ENCODE measurements at regions of chr2 and their contacts with region 1.

Region 1: DNA sequence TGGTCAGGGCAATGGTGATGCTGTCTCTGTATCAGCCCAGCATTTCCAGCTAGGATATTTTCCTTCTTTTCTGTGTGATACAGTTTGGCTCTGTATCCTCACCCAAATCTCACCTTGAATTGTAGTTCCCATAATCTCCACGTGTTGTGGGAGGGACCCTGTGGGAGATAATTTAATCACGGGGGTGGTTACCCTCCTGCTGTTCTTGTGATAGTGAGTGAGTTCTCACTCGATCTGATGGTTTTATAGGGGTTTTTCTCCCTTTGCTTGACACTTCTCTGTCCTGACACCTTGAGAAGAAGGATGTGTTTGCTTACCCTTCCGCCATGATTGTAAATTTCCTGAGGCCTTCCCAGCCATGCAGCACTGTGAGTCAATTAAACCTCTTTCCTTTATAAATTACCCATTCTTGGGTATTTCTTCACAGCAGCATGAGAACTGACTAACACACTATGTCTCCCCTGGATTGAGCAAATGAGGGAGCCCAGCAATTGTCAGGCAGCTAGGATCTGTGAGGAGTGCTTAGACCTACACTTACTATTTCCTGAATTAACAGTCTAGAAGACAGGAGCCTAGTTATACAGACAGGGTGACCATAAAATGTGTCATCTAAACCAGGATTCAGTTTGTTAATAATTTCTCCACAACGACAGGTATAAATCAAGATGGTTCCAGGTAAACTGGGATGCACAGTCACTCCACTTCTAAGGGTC is 6.0 kb downstream of the SCN2A start:
- DNase-seq: no peak
- H3K4me3 ChIP-seq: no peak overlapping the region
- H3K27ac ChIP-seq: no peak overlapping the region
- H3K4me1 ChIP-seq: no peaks in the 10 kb centered on the region
- H3K27me3 ChIP-seq: no peaks in the 10 kb centered on the region
- CTCF ChIP-seq: no peak
- EP300 ChIP-seq: no peak
- POLR2A ChIP-seq: no peak

Region 2: GRCh38 chr2:165214093-165214492 is 31.1 kb before region 1 on chr2:
- intact Hi-C with region 1: no loop called
- DNase-seq: no peak
- H3K4me3 ChIP-seq: no peak overlapping the region
- H3K27ac ChIP-seq: no peak overlapping the region
- H3K4me1 ChIP-seq: no peaks in the 10 kb centered on the region
- H3K27me3 ChIP-seq: no peaks in the 10 kb centered on the region
- CTCF ChIP-seq: no peak
- EP300 ChIP-seq: no peak
- POLR2A ChIP-seq: no peak

Region 3: GRCh38 chr2:165293440-165294353 is 48.5 kb after region 1 on chr2:
- intact Hi-C with region 1: loop called (anchors 5 kb)
- DNase-seq: no peak
- H3K4me3 ChIP-seq: peak overlapping the region in 1 of 4 donors; percentile 12
- H3K27ac ChIP-seq: no peak overlapping the region
- H3K4me1 ChIP-seq: peaks cover 0 to 9% (median 4%) of the 10 kb centered on the region in 4 donors
- H3K27me3 ChIP-seq: no peaks in the 10 kb centered on the region
- CTCF ChIP-seq: peak; percentile 66 to 77 (median 71)
- EP300 ChIP-seq: no peak
- POLR2A ChIP-seq: no peak

Measured in esophagus muscularis mucosa (tissue), 4 donors.